ENCODE measurements at regions of chr2 and their contacts with region 1.

Region 1: DNA sequence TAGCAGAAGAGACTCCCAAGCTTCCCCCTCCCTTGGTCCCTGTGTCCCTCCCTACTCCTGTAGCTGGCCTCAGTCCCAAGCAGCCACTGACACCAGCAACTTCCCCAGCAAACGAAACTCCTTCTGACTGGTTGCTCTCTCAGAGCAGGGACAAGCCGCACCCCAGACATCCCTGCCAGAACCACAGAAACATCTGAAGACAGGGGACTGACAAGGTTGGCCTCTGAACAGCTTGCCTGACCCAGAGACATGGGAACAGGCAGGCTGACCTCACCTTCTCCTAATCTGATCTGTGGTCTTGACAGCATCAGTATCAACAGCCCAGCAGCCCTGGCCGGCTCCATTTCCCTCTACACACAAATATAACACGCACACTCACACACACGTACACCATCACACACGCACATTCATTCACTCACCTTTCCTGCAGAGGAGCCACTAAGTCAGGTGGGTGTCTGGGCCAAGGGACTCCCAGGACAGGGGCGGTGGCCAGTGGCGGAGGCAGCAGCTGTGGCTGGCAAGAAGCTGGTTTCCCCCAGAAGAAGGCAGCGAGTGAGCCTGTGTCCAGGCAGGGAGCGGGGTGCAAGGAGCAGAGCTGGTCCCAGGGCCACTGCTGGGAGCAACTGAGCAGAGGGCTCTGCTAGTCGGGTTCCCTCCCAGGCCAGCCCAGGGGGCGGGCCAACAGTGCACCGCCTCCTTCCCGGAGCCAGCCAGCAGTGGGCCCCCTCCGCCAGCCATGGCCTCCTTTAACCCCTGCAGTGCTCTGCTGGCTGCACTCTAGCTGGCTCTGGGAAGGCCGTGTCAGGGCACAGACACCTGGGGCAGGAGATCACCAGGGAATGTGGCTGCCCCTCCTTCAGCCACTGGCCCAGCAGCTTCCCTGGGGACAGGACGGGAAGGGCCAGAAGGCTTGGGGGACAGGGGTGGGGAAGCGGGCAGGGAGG is 59.1 kb downstream of the TNS1 start:
- DNase-seq: peak; percentile 88
- ATAC-seq: peak; percentile 89 to 91

Region 2: DNA sequence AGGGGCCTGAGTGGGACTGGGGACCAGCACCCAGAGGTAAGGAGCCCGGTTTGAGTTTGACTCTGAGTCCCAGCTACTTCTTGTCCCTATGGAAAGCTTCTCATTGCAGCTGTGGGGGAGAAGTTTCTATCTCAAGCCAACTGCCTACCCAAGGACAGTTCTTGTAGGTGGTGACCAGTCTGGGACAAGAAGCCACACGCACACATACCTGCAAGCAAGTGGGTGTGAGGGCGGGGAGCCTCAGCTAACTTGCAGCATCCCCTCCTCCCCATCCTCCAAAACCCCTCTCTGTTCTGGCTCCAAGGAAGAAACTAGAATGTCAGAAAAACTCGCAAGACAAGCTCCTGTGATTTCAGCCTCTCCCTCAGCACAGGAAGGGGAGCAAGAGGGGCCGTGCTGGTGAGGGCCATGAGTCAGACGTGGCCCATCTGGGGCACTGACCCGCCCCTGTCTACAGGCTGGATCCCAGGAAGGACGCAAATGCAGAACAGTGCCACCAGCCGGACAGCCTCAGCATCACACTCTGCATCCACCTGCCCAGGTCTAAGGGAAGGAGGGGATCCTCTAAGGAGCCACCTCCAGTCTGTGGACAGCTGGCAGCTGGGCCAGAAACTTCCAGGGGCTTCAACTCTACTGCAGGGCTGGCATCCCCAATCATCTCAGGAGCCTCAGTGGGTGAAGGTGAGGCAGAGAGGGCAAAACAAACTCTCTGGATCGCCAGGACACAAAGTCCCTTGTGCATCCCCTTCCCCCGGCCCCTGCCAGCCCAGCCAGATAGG is 44.3 kb before region 1 on chr2:
- intact Hi-C with region 1: loop called (anchors 5 kb)
- DNase-seq: peak; percentile 78
- ATAC-seq: peak; percentile 6 to 45

Region 3: DNA sequence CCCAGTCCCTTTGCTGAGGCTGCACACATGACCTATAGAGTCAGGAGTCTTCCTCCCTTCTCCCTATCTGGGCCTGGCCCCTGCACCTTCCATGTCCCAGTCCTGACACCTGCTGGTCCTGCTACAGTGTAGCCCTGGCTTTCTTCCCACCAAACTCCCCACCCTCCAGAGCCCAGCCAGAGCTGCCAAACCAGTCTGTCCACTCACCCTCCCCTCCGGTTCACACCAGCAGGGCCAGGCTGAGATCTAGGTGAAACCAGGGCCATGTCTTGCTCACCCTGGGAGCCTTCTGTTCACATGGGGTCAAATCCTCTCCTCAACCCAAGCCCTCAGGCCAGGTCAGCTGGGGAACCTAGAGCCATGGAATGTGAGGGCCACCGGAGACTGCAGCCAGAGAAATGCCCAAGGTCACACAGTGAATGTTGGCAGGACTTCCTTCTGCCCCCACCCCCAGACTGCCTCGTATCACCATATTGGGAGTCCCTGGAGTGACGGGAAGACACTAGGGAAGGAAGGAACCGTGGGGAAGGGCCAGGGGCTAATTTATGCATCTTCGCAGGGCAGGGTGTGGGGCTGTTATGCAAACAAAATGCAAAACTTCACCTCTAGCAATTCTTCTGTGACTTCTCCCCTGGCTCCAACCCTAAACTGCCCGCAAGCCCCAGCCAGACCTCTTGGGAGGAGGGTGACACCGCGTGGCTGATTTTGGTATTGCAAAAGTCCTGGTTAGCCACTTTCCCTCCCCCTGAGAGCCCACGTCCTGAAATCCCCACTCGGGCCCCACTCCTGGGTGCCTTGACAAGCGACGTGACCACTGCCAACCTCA is 44.5 kb after region 1 on chr2:
- intact Hi-C with region 1: loop called (anchors 2 kb)
- DNase-seq: peak; percentile 87
- ATAC-seq: peak; percentile 84

Measured in left cardiac atrium (tissue), 4 donors.